Activated naive CD4-positive, alpha-beta T cell treated with anti-CD3 and anti-CD28 coated beads for 36 hours (primary cell): ENCODE measurements at regions of chr3 and their contacts with region 1.

Region 1: DNA sequence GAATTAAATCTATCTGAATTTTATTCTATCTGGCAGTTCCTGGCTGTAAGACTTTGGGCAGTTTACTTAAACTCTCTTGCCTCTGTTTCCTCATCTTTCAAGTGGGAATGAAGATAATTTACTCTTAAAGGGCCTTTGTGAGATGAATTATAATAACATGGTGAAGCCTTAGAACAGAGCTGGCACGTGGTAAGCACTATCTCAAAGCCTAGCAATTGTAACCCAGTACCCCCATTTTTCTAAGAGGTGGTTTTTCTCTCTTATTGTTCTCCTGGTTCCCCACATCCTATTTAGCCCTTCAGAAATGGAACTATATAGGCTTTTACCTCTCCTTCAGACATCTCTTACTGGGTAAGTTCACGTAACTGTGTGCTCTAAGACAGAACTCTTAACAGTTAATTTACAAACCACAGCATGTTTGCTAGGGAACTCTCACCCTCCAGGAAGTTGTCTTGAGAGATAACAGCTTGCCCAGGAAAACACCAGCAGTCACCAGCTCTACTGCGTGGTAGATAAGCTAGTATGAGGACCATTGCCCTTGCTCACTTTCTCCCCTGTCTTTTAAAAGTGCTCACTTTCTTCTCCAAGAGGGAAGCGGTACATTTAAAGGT is 12.3 kb upstream of the CRBN start:
- DNase-seq: peak; percentile 26
- H3K4me3 Mint-ChIP-seq: peak overlapping the region; percentile 14
- H3K27ac Mint-ChIP-seq: peak overlapping the region; percentile 64
- H3K4me1 Mint-ChIP-seq: peaks cover 43% of the 10 kb centered on the region
- H3K27me3 Mint-ChIP-seq: no peaks in the 10 kb centered on the region

Region 2: DNA sequence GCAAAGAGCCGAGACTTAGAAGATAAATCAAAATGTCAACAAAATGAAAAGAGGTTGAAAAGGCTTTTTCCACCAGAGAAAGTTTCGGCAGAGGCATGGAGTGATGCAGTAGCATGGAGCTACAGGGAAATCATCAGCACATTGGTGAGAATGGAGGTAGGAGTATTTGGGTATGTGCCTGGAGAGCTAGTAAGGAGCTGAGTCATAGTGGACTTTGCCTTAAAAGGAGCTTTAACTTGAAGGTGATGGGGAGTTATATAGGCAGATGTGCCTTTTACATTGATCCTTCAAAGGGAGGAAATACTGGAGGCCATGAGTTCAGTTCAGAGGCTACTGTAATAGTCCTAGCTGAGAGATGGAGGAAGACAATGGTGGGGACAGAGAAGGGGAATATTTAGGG is 125.9 kb before region 1 on chr3:
- CTCF ChIA-PET with region 1: no interaction called
- intact Hi-C with region 1: no loop called
- DNase-seq: no peak
- H3K4me3 Mint-ChIP-seq: no peak overlapping the region
- H3K27ac Mint-ChIP-seq: no peak overlapping the region
- H3K4me1 Mint-ChIP-seq: no peaks in the 10 kb centered on the region
- H3K27me3 Mint-ChIP-seq: no peaks in the 10 kb centered on the region

Region 3: GRCh38 chr3:3209714-3210113 is 17.9 kb after region 1 on chr3:
- CTCF ChIA-PET with region 1: no interaction called
- intact Hi-C with region 1: no loop called
- DNase-seq: no peak
- H3K4me3 Mint-ChIP-seq: no peak overlapping the region
- H3K27ac Mint-ChIP-seq: no peak overlapping the region
- H3K4me1 Mint-ChIP-seq: no peaks in the 10 kb centered on the region
- H3K27me3 Mint-ChIP-seq: no peaks in the 10 kb centered on the region

Region 4: GRCh38 chr3:3799173-3800079 is 607.6 kb after region 1 on chr3 and contains the start of gene LRRN1:
- CTCF ChIA-PET with region 1: no interaction called
- intact Hi-C with region 1: loop called (anchors 2 kb)
- DNase-seq: peak; percentile 74
- H3K4me3 Mint-ChIP-seq: peak within 1 kb of the TSS; percentile 82
- H3K27ac Mint-ChIP-seq: no peak within 1 kb of the TSS
- H3K4me1 Mint-ChIP-seq: peaks cover 17% of the 10 kb centered on the region
- H3K27me3 Mint-ChIP-seq: peaks cover 28% of the 10 kb centered on the region
- total RNA-seq, gene LRRN1: 0.49 to 0.67 TPM